GM10248 (cell line): ENCODE measurements at regions of chr2 and their contacts with region 1.

Region 1: DNA sequence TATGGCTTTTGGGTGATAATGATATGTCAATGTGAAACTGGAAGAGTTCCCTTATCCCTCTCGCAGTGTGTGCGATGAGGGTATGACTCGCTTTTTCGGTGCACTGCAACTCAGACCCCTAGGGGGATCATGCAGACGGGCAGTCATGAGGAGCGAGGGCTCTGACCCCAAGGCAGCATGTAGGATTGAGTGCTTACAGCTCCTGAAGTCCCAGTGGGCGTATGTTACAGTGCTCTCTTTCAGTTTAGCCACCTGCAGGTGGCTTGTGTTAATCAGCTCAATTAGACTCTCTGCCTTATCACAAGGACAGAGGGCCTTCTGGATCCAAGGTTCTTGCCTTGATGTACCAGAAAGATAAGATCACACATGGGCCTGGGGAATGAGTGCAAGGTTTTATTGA is 1269.9 kb upstream of the GYPC start:
- DNase-seq: no peak
- CTCF ChIP-seq: no peak

Region 2: GRCh38 chr2:124832521-124832920 is 553.6 kb before region 1 on chr2:
- CTCF ChIA-PET with region 1: no interaction called
- POLR2A ChIA-PET with region 1: no interaction called
- DNase-seq: no peak
- CTCF ChIP-seq: no peak

Region 3: DNA sequence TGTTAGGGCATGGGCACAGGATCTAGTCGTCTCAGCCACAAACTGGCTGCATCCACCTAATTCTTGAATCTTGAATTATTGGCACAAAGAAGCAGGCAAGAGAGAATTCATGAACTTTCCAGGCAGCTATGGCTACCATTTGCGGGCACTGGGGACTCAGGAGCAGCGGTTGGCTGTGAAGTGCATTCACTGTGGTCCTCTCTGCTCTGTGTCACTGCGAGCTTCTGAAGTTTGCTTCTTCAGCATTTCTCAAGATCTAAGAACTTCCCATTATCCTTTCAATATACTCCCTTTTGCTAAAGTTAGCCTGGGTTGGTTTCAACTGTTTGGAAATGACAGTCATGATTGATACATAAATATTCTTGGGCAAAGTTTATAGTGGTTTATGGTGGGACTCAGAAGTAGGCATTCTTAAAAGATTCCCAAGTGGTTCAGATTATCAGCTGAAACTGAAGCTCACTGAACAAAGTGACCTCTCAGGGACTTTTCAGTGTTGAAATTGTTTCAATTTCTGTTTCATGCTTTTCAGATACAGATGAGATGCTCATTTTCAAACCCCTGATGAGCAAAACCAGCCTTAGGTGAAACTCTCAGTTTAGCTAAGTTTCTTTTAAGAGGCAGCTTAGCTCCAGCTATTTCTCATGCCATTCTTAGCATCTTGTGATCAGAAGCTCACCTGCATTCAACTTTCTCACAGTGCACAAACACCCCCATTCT is 11.6 kb after region 1 on chr2:
- CTCF ChIA-PET with region 1: interaction called, 14 read pairs
- POLR2A ChIA-PET with region 1: no interaction called
- DNase-seq: peak; percentile 37
- CTCF ChIP-seq: no peak

Region 4: GRCh38 chr2:126115975-126116374 is 729.9 kb after region 1 on chr2:
- CTCF ChIA-PET with region 1: no interaction called
- POLR2A ChIA-PET with region 1: no interaction called
- DNase-seq: no peak
- CTCF ChIP-seq: no peak